ENCODE measurements at regions of chr15 and their contacts with region 1.

Region 1: DNA sequence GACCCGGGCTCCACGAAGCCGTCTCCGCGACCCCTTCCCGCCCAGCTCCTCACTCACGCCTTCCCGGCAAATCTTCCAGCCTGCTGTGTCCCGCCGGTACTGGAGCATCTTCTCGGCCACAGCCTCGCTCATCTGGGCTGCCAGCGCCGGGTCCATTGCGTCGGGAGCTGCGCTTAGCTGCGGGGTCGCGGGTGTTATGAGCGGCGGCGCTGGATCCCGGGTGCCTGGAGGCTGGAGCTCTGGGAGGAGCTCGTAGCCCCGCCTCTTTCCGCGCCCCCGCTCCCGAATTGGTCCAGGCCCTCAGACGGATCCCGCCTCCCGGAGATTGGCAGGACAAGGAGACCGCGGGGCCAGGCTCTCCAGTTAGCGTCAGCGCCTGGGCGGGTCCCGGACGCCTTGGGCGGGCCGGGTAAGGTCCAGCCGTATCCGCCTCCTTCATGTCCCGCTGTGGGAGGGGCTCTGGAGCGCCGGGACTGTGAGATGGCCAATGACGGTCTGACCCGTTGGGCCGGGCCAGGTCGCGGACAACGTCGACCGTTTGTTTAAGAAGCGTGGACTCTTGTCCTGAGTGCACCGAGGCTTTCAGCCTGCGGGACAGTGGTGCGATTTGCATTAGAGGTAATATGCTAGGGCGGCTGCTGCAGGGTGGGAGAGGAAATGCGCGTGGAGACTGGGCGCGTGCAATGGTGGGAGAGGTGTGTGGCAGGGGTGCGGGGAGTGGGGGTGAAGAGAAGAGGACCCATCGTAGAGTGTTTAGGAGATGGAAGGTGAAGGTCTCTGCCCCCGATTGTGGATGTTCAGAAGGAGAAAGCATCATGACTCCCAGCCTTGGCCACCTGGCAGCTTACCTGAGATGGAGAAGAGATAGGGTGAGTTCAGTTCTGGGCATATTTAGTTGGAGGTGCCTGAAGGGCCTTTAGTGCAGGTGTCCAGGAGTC is at the start of gene STARD5:
- DNase-seq: peak; percentile 85 to 97 (median 96)
- ATAC-seq: peak; percentile 96
- H3K4me3 ChIP-seq: peak within 1 kb of the TSS; percentile 82 to 93
- H3K4me3 Mint-ChIP-seq: peak within 1 kb of the TSS; percentile 95
- H3K27ac ChIP-seq: peak within 1 kb of the TSS; percentile 54 to 60
- H3K27ac Mint-ChIP-seq: peak within 1 kb of the TSS; percentile 93
- H3K4me1 ChIP-seq: peaks cover 27% of the 10 kb centered on the region
- H3K4me1 Mint-ChIP-seq: peaks cover 41% of the 10 kb centered on the region
- H3K27me3 ChIP-seq: no peaks in the 10 kb centered on the region
- H3K27me3 Mint-ChIP-seq: no peaks in the 10 kb centered on the region
- CTCF ChIP-seq: no peak
- total RNA-seq, gene STARD5: 13.6 to 14.3 TPM

Region 2: DNA sequence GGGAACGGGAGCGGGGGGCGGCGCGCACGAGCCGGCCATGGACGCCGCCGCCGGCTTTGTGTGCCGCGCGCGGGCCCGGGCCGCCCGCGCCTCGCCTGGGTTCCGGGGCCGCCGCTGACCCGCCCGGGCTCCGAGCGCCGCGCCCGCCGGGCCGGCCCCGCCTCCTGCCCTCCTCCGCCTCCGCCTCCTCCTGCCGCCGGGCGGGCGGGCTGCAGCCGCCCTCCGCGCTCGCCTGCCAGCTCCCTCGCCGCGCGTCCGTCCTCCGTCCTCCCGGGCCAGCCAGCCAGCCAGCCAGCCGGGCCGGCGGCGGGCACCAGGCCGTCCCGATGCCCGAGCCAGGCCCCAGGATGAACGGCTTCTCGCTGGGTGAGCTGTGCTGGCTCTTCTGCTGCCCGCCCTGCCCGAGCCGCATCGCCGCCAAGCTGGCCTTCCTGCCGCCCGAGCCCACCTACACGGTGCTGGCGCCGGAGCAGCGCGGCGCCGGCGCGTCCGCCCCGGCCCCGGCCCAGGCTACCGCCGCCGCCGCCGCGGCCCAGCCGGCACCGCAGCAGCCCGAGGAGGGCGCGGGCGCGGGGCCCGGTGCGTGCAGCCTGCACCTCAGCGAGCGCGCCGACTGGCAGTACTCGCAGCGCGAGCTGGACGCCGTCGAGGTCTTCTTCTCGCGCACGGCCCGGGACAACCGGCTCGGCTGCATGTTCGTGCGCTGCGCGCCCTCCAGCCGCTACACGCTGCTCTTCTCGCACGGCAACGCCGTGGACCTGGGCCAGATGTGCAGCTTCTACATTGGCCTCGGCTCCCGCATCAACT is 628.9 kb before region 1 on chr15 and contains the start of gene ABHD17C:
- CTCF ChIA-PET with region 1: no interaction called
- POLR2A ChIA-PET with region 1: no interaction called
- intact Hi-C with region 1: no loop called
- DNase-seq: peak in 8 of 9 experiments; percentile 14 to 70 (median 42)
- ATAC-seq: peak; percentile 69
- H3K4me3 ChIP-seq: peak within 1 kb of the TSS; percentile 58 to 63
- H3K4me3 Mint-ChIP-seq: peak within 1 kb of the TSS; percentile 95
- H3K27ac ChIP-seq: peak within 1 kb of the TSS; percentile 20 to 57
- H3K27ac Mint-ChIP-seq: peak within 1 kb of the TSS; percentile 86
- H3K4me1 ChIP-seq: peaks cover 11% of the 10 kb centered on the region
- H3K4me1 Mint-ChIP-seq: peaks cover 23% of the 10 kb centered on the region
- H3K27me3 ChIP-seq: no peaks in the 10 kb centered on the region
- H3K27me3 Mint-ChIP-seq: peaks cover 3% of the 10 kb centered on the region
- CTCF ChIP-seq: no peak
- total RNA-seq, gene ABHD17C: 0.75 to 1.1 TPM

Region 3: DNA sequence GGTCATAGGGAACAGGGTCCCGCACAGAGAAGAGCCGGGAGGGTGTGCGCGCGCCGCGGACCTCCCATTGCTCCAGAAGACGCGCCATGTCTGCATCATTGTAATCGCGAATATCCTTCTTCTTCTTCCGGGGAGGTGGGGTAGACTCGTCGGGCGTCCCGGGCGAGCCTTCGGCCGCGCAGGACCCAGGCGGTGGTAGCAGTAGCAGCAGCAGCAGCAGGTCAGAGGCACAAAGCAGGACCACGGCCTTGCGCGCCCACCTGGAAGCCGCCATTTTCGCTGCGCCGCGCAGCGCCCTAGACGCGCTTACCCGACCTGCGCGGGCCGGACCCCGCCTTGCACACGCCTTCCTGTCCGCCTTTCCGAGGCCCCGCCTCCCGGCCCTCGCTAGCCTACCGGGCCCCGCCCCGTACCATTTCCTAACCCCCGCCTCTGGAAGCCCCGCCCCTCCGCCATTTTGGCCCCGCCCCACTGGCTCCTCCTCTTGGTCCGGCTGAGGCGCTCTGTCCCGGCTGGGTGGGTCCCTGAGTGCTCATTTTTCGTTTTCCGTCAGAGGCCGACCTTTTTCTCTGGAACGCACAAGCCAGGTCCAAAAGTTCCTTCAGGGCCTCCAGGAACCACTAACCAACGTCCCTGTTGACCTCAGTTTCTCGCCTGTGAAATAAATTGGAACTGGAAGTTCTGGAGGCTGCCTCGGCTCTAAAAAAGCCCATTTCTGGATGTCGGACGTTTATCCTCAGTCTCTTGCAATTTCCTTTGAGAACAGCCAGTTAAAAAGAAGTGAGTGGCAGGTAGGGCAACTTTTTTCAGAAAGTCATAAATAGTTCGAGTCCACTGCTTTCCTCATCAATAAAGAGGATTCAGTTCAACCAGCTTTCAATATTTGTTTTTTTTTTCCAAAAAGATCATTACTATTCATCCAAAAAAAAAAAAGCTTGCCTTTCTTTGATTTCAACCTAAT is 334.4 kb before region 1 on chr15 and contains the start of gene MESD:
- CTCF ChIA-PET with region 1: no interaction called
- POLR2A ChIA-PET with region 1: no interaction called
- intact Hi-C with region 1: loop called in 1 of 2 experiments (anchors 1 kb)
- DNase-seq: peak; percentile 91 to 99 (median 98)
- ATAC-seq: peak; percentile 100
- H3K4me3 ChIP-seq: peak within 1 kb of the TSS; percentile 70 to 96
- H3K4me3 Mint-ChIP-seq: peak within 1 kb of the TSS; percentile 100
- H3K27ac ChIP-seq: peak within 1 kb of the TSS; percentile 76 to 95
- H3K27ac Mint-ChIP-seq: peak within 1 kb of the TSS; percentile 99
- H3K4me1 ChIP-seq: peaks cover 50% of the 10 kb centered on the region
- H3K4me1 Mint-ChIP-seq: peaks cover 62% of the 10 kb centered on the region
- H3K27me3 ChIP-seq: no peaks in the 10 kb centered on the region
- H3K27me3 Mint-ChIP-seq: no peaks in the 10 kb centered on the region
- CTCF ChIP-seq: no peak
- total RNA-seq, gene MESD: 6.4 to 8.1 TPM

Region 4: GRCh38 chr15:81286621-81287121 is 37.5 kb before region 1 on chr15:
- CTCF ChIA-PET with region 1: interaction called, 4 read pairs
- POLR2A ChIA-PET with region 1: interaction called, 6 read pairs
- intact Hi-C with region 1: loop called in 1 of 2 experiments (anchors 5 kb)
- DNase-seq: peak in 3 of 9 experiments; percentile 35 to 75 (median 53)
- ATAC-seq: peak; percentile 93
- H3K4me3 ChIP-seq: peak overlapping the region in 1 of 2 experiments; percentile 36
- H3K4me3 Mint-ChIP-seq: peak overlapping the region; percentile 75
- H3K27ac ChIP-seq: peak overlapping the region; percentile 48 to 88
- H3K27ac Mint-ChIP-seq: peak overlapping the region; percentile 98
- H3K4me1 ChIP-seq: peaks cover 83% of the 10 kb centered on the region
- H3K4me1 Mint-ChIP-seq: peaks cover 81% of the 10 kb centered on the region
- H3K27me3 ChIP-seq: no peaks in the 10 kb centered on the region
- H3K27me3 Mint-ChIP-seq: no peaks in the 10 kb centered on the region
- CTCF ChIP-seq: no peak

Region 5: DNA sequence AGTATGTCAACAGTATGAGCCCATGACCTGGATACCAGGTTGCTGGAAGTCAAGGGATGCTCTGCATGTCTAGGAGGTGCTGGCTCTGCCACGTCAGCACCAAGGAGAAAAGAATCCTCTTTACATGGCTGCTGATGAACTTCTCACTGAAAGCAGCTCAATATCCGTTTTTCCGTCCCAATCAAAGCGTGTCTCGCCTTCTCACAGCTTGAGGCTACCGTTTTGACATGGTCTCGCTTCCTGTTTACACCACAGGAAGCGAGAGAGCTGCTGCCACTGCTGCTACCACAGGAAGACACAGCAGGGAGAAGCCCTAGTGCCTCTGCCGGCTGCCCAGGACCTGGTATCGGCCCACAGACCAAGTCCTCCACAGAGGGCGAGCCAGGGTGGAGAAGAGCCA is 27.5 kb before region 1 on chr15:
- CTCF ChIA-PET with region 1: interaction called, 10 read pairs
- POLR2A ChIA-PET with region 1: interaction called, 13 read pairs
- intact Hi-C with region 1: loop called (anchors 1 to 2 kb)
- DNase-seq: peak; percentile 50 to 94 (median 79)
- ATAC-seq: peak; percentile 46
- H3K4me3 ChIP-seq: peak overlapping the region; percentile 88 to 89
- H3K4me3 Mint-ChIP-seq: peak overlapping the region; percentile 92
- H3K27ac ChIP-seq: peak overlapping the region; percentile 84 to 92
- H3K27ac Mint-ChIP-seq: peak overlapping the region; percentile 98
- H3K4me1 ChIP-seq: peaks cover 55% of the 10 kb centered on the region
- H3K4me1 Mint-ChIP-seq: peaks cover 72% of the 10 kb centered on the region
- H3K27me3 ChIP-seq: no peaks in the 10 kb centered on the region
- H3K27me3 Mint-ChIP-seq: no peaks in the 10 kb centered on the region
- CTCF ChIP-seq: no peak

Region 6: GRCh38 chr15:81301815-81302399 is 22.3 kb before region 1 on chr15:
- CTCF ChIA-PET with region 1: interaction called, 10 read pairs
- POLR2A ChIA-PET with region 1: interaction called, 49 read pairs
- intact Hi-C with region 1: loop called in 1 of 2 experiments (anchors 2 kb)
- DNase-seq: peak in 1 of 9 experiments; percentile 51
- ATAC-seq: no peak
- H3K4me3 ChIP-seq: peak overlapping the region; percentile 61 to 89
- H3K4me3 Mint-ChIP-seq: peak overlapping the region; percentile 92
- H3K27ac ChIP-seq: peak overlapping the region; percentile 28 to 92
- H3K27ac Mint-ChIP-seq: peak overlapping the region; percentile 98
- H3K4me1 ChIP-seq: peaks cover 58% of the 10 kb centered on the region
- H3K4me1 Mint-ChIP-seq: peaks cover 72% of the 10 kb centered on the region
- H3K27me3 ChIP-seq: no peaks in the 10 kb centered on the region
- H3K27me3 Mint-ChIP-seq: no peaks in the 10 kb centered on the region
- CTCF ChIP-seq: no peak

Region 7: GRCh38 chr15:81311752-81312464 is 12.3 kb before region 1 on chr15:
- CTCF ChIA-PET with region 1: interaction called, 7 read pairs
- POLR2A ChIA-PET with region 1: interaction called, 49 read pairs
- intact Hi-C with region 1: loop called in 1 of 2 experiments (anchors 2 kb)
- DNase-seq: peak in 1 of 9 experiments; percentile 37
- ATAC-seq: peak; percentile 43
- H3K4me3 ChIP-seq: no peak overlapping the region
- H3K4me3 Mint-ChIP-seq: peak overlapping the region; percentile 20
- H3K27ac ChIP-seq: peak overlapping the region; percentile 4 to 39
- H3K27ac Mint-ChIP-seq: peak overlapping the region; percentile 91
- H3K4me1 ChIP-seq: peaks cover 70% of the 10 kb centered on the region
- H3K4me1 Mint-ChIP-seq: peaks cover 86% of the 10 kb centered on the region
- H3K27me3 ChIP-seq: no peaks in the 10 kb centered on the region
- H3K27me3 Mint-ChIP-seq: no peaks in the 10 kb centered on the region
- CTCF ChIP-seq: no peak

Region 8: GRCh38 chr15:82294061-82294690 is 970.0 kb after region 1 on chr15:
- CTCF ChIA-PET with region 1: no interaction called
- POLR2A ChIA-PET with region 1: no interaction called
- intact Hi-C with region 1: loop called in 1 of 2 experiments (anchors 10 kb)
- DNase-seq: no peak
- ATAC-seq: no peak
- H3K4me3 ChIP-seq: no peak overlapping the region
- H3K4me3 Mint-ChIP-seq: no peak overlapping the region
- H3K27ac ChIP-seq: no peak overlapping the region
- H3K27ac Mint-ChIP-seq: no peak overlapping the region
- H3K4me1 ChIP-seq: peaks cover 14% of the 10 kb centered on the region
- H3K4me1 Mint-ChIP-seq: peaks cover 28% of the 10 kb centered on the region
- H3K27me3 ChIP-seq: no peaks in the 10 kb centered on the region
- H3K27me3 Mint-ChIP-seq: no peaks in the 10 kb centered on the region
- CTCF ChIP-seq: no peak